ENCODE measurements at regions of chr16 and their contacts with region 1.

Region 1: GRCh38 chr16:85928401-85928820 is 29.4 kb downstream of the IRF8 start:
- DNase-seq: no peak
- H3K4me3 ChIP-seq: no peak overlapping the region
- H3K4me3 Mint-ChIP-seq: no peak overlapping the region
- H3K27ac Mint-ChIP-seq: no peak overlapping the region
- H3K4me1 ChIP-seq: peaks cover 21% of the 10 kb centered on the region
- H3K4me1 Mint-ChIP-seq: peaks cover 8% of the 10 kb centered on the region
- H3K27me3 ChIP-seq: no peaks in the 10 kb centered on the region
- H3K27me3 Mint-ChIP-seq: no peaks in the 10 kb centered on the region
- CTCF ChIP-seq: no peak

Region 2: DNA sequence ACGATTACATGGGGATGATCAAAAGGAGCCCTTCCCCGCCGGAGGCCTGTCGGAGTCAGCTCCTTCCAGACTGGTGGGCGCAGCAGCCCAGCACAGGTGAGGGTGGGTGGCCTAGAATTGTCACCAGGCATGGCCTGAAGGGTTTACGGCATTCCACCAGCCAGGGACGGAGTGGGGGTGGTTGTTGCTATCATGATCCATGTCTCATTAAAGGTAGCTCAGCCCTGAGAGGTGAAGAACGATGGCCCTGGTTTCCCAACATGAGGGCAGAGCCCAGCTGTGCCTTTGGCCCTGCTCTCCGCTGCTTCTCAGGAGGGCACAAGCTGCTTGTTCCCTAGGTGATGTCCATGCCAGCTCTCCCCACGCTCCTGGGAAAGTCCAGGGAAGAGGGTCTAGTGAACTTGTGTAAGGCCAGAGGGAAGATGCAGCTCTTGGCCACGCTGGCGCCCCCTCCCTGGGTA is 15.2 kb before region 1 on chr16:
- CTCF ChIA-PET with region 1: no interaction called
- POLR2A ChIA-PET with region 1: interaction called, 12 read pairs
- intact Hi-C with region 1: no loop called
- DNase-seq: no peak
- H3K4me3 ChIP-seq: no peak overlapping the region
- H3K4me3 Mint-ChIP-seq: no peak overlapping the region
- H3K27ac Mint-ChIP-seq: no peak overlapping the region
- H3K4me1 ChIP-seq: peaks cover 20% of the 10 kb centered on the region
- H3K4me1 Mint-ChIP-seq: peaks cover 7% of the 10 kb centered on the region
- H3K27me3 ChIP-seq: no peaks in the 10 kb centered on the region
- H3K27me3 Mint-ChIP-seq: no peaks in the 10 kb centered on the region
- CTCF ChIP-seq: no peak

Region 3: GRCh38 chr16:85979605-85980004 is 51.2 kb after region 1 on chr16:
- CTCF ChIA-PET with region 1: no interaction called
- POLR2A ChIA-PET with region 1: no interaction called
- intact Hi-C with region 1: loop called (anchors 5 kb)
- DNase-seq: no peak
- H3K4me3 ChIP-seq: no peak overlapping the region
- H3K4me3 Mint-ChIP-seq: no peak overlapping the region
- H3K27ac Mint-ChIP-seq: peak overlapping the region; percentile 3
- H3K4me1 ChIP-seq: peaks cover 34% of the 10 kb centered on the region
- H3K4me1 Mint-ChIP-seq: peaks cover 30% of the 10 kb centered on the region
- H3K27me3 ChIP-seq: no peaks in the 10 kb centered on the region
- H3K27me3 Mint-ChIP-seq: no peaks in the 10 kb centered on the region
- CTCF ChIP-seq: no peak